ENCODE measurements at regions of chr19 and their contacts with region 1.

Region 1: GRCh38 chr19:17555480-17555928 is at the start of gene COLGALT1:
- DNase-seq: peak; percentile 100
- ATAC-seq: peak; percentile 96
- H3K4me3 Mint-ChIP-seq: peak within 1 kb of the TSS; percentile 82
- H3K27ac Mint-ChIP-seq: peak within 1 kb of the TSS; percentile 67
- H3K4me1 Mint-ChIP-seq: peaks cover 21% of the 10 kb centered on the region
- H3K27me3 Mint-ChIP-seq: no peaks in the 10 kb centered on the region
- total RNA-seq, gene COLGALT1: 51.2 to 64.3 TPM

Region 2: GRCh38 chr19:17336872-17337722 is 218.4 kb before region 1 on chr19 and contains the start of gene GTPBP3:
- CTCF ChIA-PET with region 1: no interaction called
- POLR2A ChIA-PET with region 1: interaction called, 3 read pairs
- intact Hi-C with region 1: loop called in 1 of 2 experiments (anchors 1 kb)
- DNase-seq: peak; percentile 98
- ATAC-seq: peak; percentile 89
- H3K4me3 Mint-ChIP-seq: peak within 1 kb of the TSS; percentile 98
- H3K27ac Mint-ChIP-seq: peak within 1 kb of the TSS; percentile 98
- H3K4me1 Mint-ChIP-seq: peaks cover 25% of the 10 kb centered on the region
- H3K27me3 Mint-ChIP-seq: no peaks in the 10 kb centered on the region
- total RNA-seq, gene GTPBP3: 37.3 to 39.8 TPM

Region 3: GRCh38 chr19:17419621-17420466 is 135.7 kb before region 1 on chr19 and contains the start of gene MVB12A:
- CTCF ChIA-PET with region 1: no interaction called
- POLR2A ChIA-PET with region 1: no interaction called
- intact Hi-C with region 1: loop called in 1 of 2 experiments (anchors 1 kb)
- DNase-seq: peak; percentile 97
- ATAC-seq: peak; percentile 95
- H3K4me3 Mint-ChIP-seq: peak within 1 kb of the TSS; percentile 91
- H3K27ac Mint-ChIP-seq: peak within 1 kb of the TSS; percentile 87
- H3K4me1 Mint-ChIP-seq: peaks cover 11% of the 10 kb centered on the region
- H3K27me3 Mint-ChIP-seq: no peaks in the 10 kb centered on the region
- total RNA-seq, gene MVB12A: 27.6 to 32.6 TPM

Region 4: GRCh38 chr19:17479325-17479791 is 76.1 kb before region 1 on chr19:
- CTCF ChIA-PET with region 1: no interaction called
- POLR2A ChIA-PET with region 1: no interaction called
- intact Hi-C with region 1: no loop called
- DNase-seq: no peak
- ATAC-seq: no peak
- H3K4me3 Mint-ChIP-seq: no peak overlapping the region
- H3K27ac Mint-ChIP-seq: no peak overlapping the region
- H3K4me1 Mint-ChIP-seq: no peaks in the 10 kb centered on the region
- H3K27me3 Mint-ChIP-seq: no peaks in the 10 kb centered on the region

Region 5: DNA sequence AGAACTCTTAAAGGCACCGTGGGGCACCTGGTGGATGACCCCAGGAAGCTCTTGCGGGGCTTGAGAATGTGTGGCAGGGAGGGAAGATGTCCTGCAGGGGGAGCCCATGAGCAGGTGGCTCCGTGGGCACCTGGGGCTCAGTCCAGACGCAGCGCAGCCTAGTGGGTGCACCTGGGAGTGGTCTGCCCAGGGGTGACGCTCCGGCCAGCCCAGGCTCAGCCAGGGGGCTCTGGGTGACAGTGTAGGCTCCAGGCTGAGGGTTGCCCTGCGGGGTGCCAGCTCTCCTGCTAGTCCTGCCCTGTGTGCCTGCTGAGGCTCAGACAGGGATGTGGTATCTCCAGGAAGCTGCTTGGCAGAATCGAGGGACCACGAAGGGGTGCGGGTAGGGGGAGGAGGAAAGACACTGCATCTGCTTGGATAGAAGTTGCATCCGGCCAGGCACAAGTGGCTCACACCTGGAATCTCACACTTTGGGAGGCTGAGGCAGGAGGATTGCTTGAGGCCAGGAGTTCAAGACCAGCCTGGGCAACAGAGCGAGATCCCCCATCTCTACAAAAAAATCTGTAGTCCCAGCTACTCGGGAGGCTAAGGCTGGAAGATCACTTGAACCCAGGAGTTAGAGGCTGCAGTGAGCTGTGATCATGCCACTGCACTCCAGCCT is 59.0 kb before region 1 on chr19:
- CTCF ChIA-PET with region 1: interaction called, 5 read pairs
- POLR2A ChIA-PET with region 1: interaction called, 6 read pairs
- intact Hi-C with region 1: loop called in 1 of 2 experiments (anchors 1 kb)
- DNase-seq: peak; percentile 93
- ATAC-seq: peak; percentile 99
- H3K4me3 Mint-ChIP-seq: no peak overlapping the region
- H3K27ac Mint-ChIP-seq: no peak overlapping the region
- H3K4me1 Mint-ChIP-seq: peaks cover 14% of the 10 kb centered on the region
- H3K27me3 Mint-ChIP-seq: no peaks in the 10 kb centered on the region

Region 6: GRCh38 chr19:17570791-17571190 is 15.3 kb after region 1 on chr19:
- CTCF ChIA-PET with region 1: interaction called, 12 read pairs
- POLR2A ChIA-PET with region 1: no interaction called
- intact Hi-C with region 1: no loop called
- DNase-seq: no peak
- ATAC-seq: no peak
- H3K4me3 Mint-ChIP-seq: no peak overlapping the region
- H3K27ac Mint-ChIP-seq: no peak overlapping the region
- H3K4me1 Mint-ChIP-seq: no peaks in the 10 kb centered on the region
- H3K27me3 Mint-ChIP-seq: no peaks in the 10 kb centered on the region

Region 7: DNA sequence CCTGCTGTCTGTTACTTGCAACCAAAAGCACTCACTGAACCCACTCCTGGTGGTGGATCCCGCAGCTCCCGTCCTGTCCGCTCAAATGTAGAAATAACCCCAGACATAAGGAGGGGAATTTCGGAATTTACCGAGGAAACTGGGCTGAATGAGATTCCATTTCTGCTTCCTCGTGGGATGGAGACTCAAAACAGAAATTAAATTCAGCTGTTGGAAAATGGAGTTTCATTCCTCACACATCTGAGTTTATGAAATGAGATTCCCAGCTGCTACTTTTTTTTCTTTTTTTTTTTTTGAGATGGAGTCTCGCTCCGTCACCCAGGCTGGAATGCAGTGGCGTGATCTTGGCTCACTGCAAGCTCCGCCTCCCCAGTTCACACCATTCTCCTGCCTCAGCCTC is 44.3 kb after region 1 on chr19:
- CTCF ChIA-PET with region 1: no interaction called
- POLR2A ChIA-PET with region 1: no interaction called
- intact Hi-C with region 1: no loop called
- DNase-seq: no peak
- ATAC-seq: no peak
- H3K4me3 Mint-ChIP-seq: no peak overlapping the region
- H3K27ac Mint-ChIP-seq: no peak overlapping the region
- H3K4me1 Mint-ChIP-seq: no peaks in the 10 kb centered on the region
- H3K27me3 Mint-ChIP-seq: peaks cover 31% of the 10 kb centered on the region

Region 8: GRCh38 chr19:17718947-17719711 is 163.6 kb after region 1 on chr19 and contains the start of gene MAP1S:
- CTCF ChIA-PET with region 1: interaction called, 3 read pairs
- POLR2A ChIA-PET with region 1: no interaction called
- intact Hi-C with region 1: loop called in 1 of 2 experiments (anchors 1 kb)
- DNase-seq: peak; percentile 86
- ATAC-seq: peak; percentile 83
- H3K4me3 Mint-ChIP-seq: peak within 1 kb of the TSS; percentile 81
- H3K27ac Mint-ChIP-seq: peak within 1 kb of the TSS; percentile 88
- H3K4me1 Mint-ChIP-seq: peaks cover 35% of the 10 kb centered on the region
- H3K27me3 Mint-ChIP-seq: no peaks in the 10 kb centered on the region
- total RNA-seq, gene MAP1S: 57.6 to 79.3 TPM

Measured in activated CD4-positive, alpha-beta T cell treated with anti-CD3 and anti-CD28 coated beads for 36 hours (primary cell).